ENCODE measurements at regions of chr17 and their contacts with region 1.

Region 1: DNA sequence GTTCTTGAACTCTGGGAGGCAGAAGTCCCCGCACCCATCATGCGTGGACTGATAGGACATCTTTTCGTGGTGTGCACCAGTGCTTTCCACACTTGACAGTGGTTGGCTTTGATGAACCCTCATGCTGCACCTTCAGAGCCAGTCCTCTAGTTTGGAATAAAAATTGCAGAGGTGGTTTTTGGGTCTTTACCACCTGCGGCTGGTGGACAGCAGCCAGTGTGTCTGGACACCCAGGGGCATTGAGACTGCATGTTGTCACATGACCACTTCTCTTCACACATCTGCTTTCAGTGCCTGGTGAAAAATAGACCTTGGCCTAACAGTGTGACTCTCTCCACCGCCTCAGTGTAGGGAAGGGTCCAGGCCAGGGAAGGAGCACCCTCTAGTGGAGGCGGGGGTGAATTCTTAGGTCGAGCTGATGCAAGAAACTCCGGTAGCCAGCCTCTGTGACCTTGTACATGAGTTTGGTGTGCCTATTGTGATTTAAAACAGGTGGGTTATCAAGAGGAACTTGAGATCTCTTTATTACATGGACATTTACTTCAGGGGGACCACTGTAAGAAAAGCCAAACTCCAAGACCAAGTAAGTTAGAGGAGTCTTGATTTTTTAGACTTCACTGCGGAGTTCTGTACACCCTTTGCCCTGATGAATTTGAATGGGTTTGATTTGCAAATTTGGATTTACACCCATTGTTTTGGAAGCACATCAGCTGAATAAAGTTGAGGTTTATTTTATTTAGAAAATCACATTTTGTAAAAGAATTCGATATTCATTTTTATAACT is 17.9 kb downstream of the GOSR2 start:
- DNase-seq: no peak

Region 2: DNA sequence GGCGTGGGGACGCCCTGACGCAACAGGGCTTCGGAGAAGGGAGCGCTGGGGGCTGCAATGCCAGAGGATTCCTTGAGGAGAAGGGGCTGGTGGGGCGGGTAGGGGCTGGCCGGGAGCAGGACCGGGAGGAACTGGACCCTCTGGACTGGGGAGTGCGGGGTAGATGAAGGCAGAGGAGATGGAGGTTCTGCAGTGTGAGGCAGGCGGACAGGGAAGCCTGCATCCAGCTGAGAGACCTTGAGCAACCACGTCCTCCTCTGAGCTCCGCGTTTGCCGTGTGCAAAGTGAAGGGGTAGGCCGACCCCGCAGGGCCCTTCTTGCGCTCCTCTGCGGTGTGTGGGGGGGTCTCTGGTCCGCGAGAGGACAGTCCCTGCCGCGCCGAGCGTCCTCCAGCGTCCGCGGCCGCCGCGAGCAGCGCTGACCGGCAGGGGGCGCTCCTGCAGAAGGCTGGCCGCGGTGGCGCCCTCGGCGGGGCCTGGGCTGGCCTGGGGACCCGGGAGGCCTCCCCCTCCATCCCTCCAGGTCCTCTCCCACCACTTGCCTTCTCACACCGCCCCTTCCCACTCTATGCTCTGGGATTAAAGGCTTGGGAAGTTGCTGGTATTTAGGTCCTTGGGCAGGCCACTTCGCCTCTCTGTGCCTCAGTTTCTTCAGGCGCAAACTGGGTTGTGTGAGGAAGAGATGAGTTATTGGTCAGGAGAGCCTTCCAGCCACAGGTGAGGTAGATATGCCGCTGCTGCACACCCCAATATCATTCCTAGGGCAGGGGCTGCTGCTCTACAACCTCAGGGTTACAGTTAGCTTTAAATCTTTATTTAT is 99.0 kb before region 1 on chr17:
- intact Hi-C with region 1: loop called (anchors 5 kb)
- DNase-seq: no peak

Region 3: DNA sequence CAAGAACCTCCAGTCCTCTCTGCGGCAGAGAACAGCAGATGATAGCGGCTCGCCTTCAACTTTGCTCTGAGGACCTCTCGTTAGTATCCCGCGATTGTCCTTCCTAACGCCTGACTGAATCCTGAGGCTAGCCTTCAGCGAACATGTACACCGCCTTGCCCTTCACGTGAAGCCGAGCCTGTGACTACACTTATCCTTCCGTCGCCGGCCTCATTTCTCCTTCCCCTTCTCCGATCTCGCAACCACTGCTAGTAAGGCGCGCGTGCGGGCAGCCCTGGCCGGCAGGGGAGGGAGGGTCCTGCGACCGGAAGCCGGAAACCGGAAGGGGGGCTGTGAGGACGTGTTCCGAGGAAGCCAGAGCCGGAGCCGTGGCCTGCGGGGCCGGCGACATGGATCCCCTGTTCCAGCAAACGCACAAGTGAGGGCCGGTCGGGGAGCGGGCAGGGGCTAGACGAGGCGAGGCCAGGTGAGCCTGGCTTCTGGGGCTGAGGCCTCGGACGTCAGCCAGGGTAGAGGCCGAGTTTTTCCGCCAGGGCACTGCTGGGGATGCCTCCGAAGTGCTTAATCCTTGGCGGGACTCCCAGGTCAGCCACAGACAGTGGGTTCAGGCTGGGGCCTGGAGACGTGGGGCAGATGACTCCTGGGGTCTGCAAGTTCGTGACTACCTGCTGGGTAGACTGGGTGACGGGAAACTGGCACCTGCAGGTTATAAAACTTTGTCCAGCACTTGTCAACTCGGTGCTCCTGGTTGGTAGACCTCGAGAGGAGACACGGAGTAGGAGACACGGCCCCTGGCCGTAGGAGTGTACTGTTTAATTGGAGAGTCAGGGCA is 17.8 kb before region 1 on chr17 and contains the start of gene GOSR2:
- intact Hi-C with region 1: no loop called
- DNase-seq: peak; percentile 96
- total RNA-seq, gene GOSR2: 45.9 TPM

Region 4: DNA sequence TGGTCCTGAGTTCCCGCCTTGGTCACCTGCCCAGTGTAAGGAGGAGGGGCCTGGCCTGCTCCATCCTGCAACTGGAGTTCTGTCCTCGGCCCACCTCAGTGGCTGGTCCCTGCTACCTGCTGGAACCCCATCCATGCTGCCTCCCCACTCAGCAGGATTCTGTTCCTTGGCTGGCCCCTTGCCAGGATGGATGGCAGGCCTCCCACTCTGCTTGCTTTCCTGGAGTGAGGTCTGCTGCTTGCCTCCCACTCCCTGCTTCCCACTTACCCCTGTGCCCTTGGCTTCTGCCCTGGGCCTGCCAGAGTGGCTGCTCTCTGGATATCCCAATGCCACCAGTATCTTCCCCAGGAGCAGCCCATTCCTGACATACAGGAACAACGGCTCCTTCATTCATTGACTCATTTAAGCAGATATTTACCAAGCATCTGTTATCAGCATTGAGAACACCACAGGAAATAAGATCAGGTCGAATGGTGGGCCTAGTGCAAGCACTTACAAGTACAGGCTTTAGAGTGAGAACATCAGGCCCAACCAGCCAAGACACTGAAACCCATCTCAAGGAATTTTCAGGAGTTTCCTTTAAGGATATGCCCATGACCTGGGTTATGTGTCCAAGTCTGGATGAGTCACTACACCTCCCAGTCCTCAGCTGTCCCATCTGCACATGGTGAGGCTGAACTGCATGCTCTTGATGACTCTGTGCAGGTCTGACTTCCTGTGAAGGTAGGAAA is 55.2 kb after region 1 on chr17:
- intact Hi-C with region 1: loop called (anchors 1 kb)
- DNase-seq: no peak